Tibial artery (tissue), 4 donors: ENCODE measurements at regions of chr2 and their contacts with region 1.

Region 1: DNA sequence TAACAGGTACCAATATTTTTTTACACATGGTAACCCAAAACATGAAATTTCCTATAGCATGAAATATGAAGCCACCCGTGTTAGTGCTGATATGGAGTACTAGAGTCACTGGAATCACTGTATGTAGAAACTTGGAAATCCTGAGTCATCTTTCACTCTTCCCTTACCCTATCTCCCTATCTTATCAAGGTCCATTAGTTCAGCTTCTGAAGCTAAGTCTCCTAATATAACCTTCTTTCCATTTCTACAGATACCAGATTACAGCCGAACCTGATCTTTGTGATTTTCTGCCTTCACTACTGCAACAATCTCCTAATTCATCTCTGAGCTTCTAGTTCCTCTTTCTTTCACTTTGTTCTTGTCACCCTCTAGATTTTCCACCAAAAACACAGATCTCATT is 59.0 kb downstream of the SEPTIN10 start:
- DNase-seq: no peak
- H3K4me3 ChIP-seq: no peak overlapping the region
- H3K27ac ChIP-seq: no peak overlapping the region
- H3K4me1 ChIP-seq: peaks cover 0 to 9% (median 0%) of the 10 kb centered on the region in 4 donors
- H3K27me3 ChIP-seq: no peaks in the 10 kb centered on the region
- CTCF ChIP-seq: no peak

Region 2: GRCh38 chr2:109486711-109487535 is 67.8 kb before region 1 on chr2:
- intact Hi-C with region 1: no loop called
- DNase-seq: no peak
- H3K4me3 ChIP-seq: no peak overlapping the region
- H3K27ac ChIP-seq: peak overlapping the region; percentile 50 to 66
- H3K4me1 ChIP-seq: peaks cover 0 to 50% (median 35%) of the 10 kb centered on the region in 4 donors
- H3K27me3 ChIP-seq: no peaks in the 10 kb centered on the region
- CTCF ChIP-seq: no peak

Region 3: DNA sequence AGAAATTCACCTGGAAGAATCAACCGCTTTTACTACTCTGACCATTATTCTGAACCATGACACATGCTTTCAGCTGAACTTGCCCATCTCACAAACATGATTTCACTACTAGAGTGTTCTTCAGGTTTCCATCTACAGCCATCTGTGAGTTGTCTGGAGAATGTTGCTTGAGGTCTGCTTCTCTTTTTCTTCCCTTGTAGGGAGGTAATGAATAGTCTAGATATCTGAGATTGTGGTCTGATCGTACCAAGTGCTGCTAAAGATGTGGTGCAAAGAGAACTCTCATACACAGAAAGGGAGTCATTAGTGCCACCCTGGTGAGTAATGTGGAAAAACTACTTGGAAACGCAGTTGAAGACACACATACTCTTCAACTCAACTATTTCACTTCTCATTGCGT is 69.6 kb after region 1 on chr2:
- intact Hi-C with region 1: no loop called
- DNase-seq: no peak
- H3K4me3 ChIP-seq: no peak overlapping the region
- H3K27ac ChIP-seq: no peak overlapping the region
- H3K4me1 ChIP-seq: no peaks in the 10 kb centered on the region
- H3K27me3 ChIP-seq: no peaks in the 10 kb centered on the region
- CTCF ChIP-seq: no peak

Region 4: DNA sequence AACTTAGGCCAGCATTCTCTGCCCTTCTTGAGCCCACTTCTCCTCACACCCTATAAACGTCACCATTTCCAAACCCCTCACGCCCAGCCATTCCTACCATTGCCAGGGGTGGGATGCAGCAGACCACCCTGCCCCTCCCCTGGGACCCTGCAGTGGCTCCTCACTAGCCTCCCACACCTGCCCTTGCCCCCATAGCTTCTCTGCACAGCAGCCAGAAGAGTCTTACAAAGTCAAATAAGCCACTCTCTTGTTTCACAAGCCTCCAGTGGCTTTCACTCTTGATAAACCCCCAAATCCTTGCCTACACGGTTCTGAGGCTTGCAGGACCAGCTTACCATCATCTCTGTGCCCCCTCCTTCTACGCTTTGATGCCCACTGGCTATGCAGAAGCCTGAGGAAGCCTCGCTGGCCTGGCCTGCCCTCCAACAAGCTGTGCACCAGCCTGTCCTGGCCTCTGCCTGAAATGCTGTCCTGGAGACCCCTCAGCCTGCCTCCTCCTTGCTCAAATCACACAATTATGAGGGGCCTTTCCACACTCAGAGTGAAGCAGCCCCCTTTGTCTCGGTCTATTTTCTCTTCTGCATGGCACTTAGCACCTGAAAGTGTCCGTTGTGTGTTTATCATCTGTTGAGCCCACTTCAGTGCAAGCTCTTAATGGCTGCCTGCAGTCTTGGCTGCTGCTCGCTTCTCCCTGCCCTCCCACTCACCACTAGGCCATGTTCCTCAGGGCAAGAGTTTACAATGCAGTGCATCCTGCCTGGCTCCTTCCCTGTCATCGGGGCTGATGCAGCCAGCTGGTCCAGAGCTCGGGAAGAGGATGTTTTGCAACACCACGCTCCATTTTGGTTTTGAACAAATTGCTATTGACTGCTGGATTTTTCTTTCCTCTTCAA is 156.7 kb after region 1 on chr2:
- intact Hi-C with region 1: loop called (anchors 5 kb)
- DNase-seq: peak in 1 of 2 donors; percentile 48
- H3K4me3 ChIP-seq: no peak overlapping the region
- H3K27ac ChIP-seq: no peak overlapping the region
- H3K4me1 ChIP-seq: no peaks in the 10 kb centered on the region
- H3K27me3 ChIP-seq: no peaks in the 10 kb centered on the region
- CTCF ChIP-seq: no peak

Region 5: DNA sequence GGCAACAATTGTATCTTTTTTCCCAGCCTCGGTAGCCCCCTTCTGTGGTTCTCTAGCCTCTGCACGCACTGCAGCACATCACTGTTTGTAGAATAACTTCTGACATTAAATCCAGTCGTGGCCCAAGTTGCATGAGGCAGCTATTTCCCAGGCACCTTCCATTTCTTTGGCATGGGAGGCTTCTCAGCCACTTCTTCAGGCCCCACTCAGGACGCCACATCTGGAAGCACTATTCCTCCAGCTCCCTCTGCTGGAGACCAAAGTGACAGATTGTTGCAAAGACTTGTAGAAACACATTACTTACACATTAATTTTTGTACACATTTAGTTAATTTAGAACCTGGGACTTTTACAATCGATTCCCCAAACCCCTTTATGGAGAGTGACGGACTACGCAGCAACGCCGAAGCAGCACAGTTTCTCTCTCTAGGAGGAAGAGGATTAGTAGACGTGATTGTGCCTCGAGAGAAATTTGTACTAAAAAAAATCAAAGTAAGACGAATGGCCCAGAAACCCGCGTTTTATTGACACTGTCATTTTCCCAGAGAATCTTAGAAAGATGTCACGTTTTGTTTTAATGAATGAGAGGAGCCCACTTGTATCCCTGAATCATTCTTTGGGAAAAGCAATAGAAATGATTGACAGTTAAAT is 181.5 kb after region 1 on chr2:
- intact Hi-C with region 1: loop called (anchors 5 kb)
- DNase-seq: peak; percentile 67 to 75
- H3K4me3 ChIP-seq: no peak overlapping the region
- H3K27ac ChIP-seq: no peak overlapping the region
- H3K4me1 ChIP-seq: no peaks in the 10 kb centered on the region
- H3K27me3 ChIP-seq: no peaks in the 10 kb centered on the region
- CTCF ChIP-seq: peak; percentile 70 to 72